ENCODE measurements at regions of chr1 and their contacts with region 1.

Region 1: GRCh38 chr1:3609016-3609768 is 2.1 kb downstream of the MEGF6 start:
- DNase-seq: no peak
- H3K4me3 ChIP-seq: no peak overlapping the region
- H3K27me3 ChIP-seq: peaks cover 11% of the 10 kb centered on the region
- CTCF ChIP-seq: no peak

Region 2: GRCh38 chr1:3624200-3625136 is 15.3 kb after region 1 on chr1 and contains the start of gene TPRG1L:
- CTCF ChIA-PET with region 1: interaction called, 17 read pairs
- POLR2A ChIA-PET with region 1: interaction called, 22 read pairs
- DNase-seq: peak; percentile 74
- H3K4me3 ChIP-seq: peak within 1 kb of the TSS; percentile 98
- H3K27me3 ChIP-seq: no peaks in the 10 kb centered on the region
- CTCF ChIP-seq: no peak
- polyA plus RNA-seq, gene TPRG1L: 45.8 and 52.1 TPM in 2 replicates